HCT116 (cell line): ENCODE measurements at regions of chr3 and their contacts with region 1.

Region 1: GRCh38 chr3:170414202-170414663 is 4.4 kb upstream of the CLDN11 start:
- DNase-seq: peak; percentile 45
- ATAC-seq: peak; percentile 84
- H3K4me3 ChIP-seq: no peak overlapping the region
- H3K27ac ChIP-seq: no peak overlapping the region
- H3K4me1 ChIP-seq: no peaks in the 10 kb centered on the region
- H3K27me3 ChIP-seq: no peaks in the 10 kb centered on the region
- CTCF ChIP-seq: peak; percentile 92 to 98 (median 95)
- POLR2A ChIP-seq: no peak
- RAD21 ChIP-seq: peak; percentile 96

Region 2: DNA sequence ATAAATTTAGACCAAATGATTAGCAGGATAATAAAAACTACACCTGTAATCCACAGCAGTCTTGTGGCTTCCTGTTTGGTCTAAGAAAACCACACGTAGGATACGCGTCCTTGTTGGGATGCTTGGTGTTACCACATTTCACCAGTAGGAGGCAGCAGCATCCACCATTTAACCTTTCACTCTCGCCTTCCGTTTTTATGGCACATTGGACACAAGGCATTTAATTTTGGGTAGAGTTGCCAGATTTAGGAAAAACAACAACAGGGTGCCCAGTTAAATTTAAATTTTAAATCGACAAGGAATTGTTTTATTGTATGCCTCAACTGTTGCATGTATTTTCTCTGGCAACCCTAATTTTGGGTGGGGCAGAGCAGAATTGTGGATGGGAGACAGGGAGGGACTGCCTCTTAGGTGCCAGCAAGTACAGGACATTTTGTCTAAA is 550.8 kb before region 1 on chr3:
- CTCF ChIA-PET with region 1: no interaction called
- POLR2A ChIA-PET with region 1: no interaction called
- RAD21 ChIA-PET with region 1: no interaction called
- intact Hi-C with region 1: loop called (anchors 10 kb)
- DNase-seq: peak; percentile 73
- ATAC-seq: peak; percentile 94
- H3K4me3 ChIP-seq: no peak overlapping the region
- H3K27ac ChIP-seq: no peak overlapping the region
- H3K4me1 ChIP-seq: peaks cover 4 to 5% of the 10 kb centered on the region in 2 experiments; a peak in 3 of 4 replicates
- H3K27me3 ChIP-seq: no peaks in the 10 kb centered on the region
- CTCF ChIP-seq: peak; percentile 82 to 93 (median 83)
- POLR2A ChIP-seq: no peak
- RAD21 ChIP-seq: peak; percentile 90

Region 3: DNA sequence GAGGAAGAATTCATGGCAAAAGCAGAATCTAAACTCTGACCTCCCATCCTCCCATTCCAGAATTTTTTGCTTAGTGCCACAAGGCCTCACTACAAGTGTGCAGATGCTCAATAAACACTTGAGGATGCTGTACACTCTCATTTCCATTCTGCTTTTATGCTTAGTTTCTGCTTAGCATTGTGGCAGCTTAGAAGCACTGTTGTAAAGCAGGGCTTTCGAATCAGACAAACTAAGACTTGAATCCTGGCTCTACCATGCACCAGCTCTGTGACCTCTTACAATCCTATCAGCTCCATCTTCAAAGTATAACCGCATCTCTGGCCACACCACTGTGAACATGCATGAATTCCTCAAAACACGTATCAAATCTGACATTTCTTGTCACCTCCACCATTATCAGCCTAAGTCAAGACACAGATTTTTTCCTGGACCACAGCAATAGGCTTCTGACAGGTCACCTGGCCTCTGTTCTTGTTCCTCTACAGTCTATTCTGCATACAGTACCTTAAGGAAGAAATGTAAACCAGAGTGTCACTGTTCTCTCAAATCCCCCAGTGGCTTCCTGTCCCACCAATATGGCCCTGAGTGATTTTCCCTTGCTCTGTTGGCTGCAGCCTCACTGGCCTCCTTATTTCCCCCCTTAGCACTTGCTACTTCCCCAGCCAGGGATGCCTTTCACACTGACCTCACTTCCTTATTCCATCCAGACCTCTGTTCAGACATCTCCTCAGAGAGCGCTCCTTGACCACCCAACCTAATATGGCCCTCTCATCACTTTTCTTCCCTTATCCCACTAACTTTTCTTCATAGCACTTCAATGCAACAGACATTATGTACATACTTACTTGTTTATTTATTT is 224.6 kb before region 1 on chr3:
- CTCF ChIA-PET with region 1: interaction called, 3 read pairs
- POLR2A ChIA-PET with region 1: no interaction called
- RAD21 ChIA-PET with region 1: no interaction called
- intact Hi-C with region 1: loop called (anchors 5 kb)
- DNase-seq: no peak
- ATAC-seq: peak; percentile 52
- H3K4me3 ChIP-seq: peak overlapping the region in 1 of 2 experiments; percentile 8; a peak in 1 of 4 replicates
- H3K27ac ChIP-seq: no peak overlapping the region
- H3K4me1 ChIP-seq: peaks cover 0 to 8% of the 10 kb centered on the region in 2 experiments; a peak in 1 of 4 replicates
- H3K27me3 ChIP-seq: no peaks in the 10 kb centered on the region
- CTCF ChIP-seq: no peak
- POLR2A ChIP-seq: no peak
- RAD21 ChIP-seq: no peak

Region 4: GRCh38 chr3:170499565-170500156 is 85.4 kb after region 1 on chr3:
- CTCF ChIA-PET with region 1: interaction called, 11 read pairs
- POLR2A ChIA-PET with region 1: no interaction called
- RAD21 ChIA-PET with region 1: no interaction called
- intact Hi-C with region 1: loop called (anchors 5 kb)
- DNase-seq: peak; percentile 16
- ATAC-seq: peak; percentile 96
- H3K4me3 ChIP-seq: no peak overlapping the region
- H3K27ac ChIP-seq: no peak overlapping the region
- H3K4me1 ChIP-seq: no peaks in the 10 kb centered on the region
- H3K27me3 ChIP-seq: no peaks in the 10 kb centered on the region
- CTCF ChIP-seq: peak; percentile 39 to 82 (median 69); a peak in 5 of 6 replicates
- POLR2A ChIP-seq: no peak
- RAD21 ChIP-seq: peak; percentile 55

Region 5: DNA sequence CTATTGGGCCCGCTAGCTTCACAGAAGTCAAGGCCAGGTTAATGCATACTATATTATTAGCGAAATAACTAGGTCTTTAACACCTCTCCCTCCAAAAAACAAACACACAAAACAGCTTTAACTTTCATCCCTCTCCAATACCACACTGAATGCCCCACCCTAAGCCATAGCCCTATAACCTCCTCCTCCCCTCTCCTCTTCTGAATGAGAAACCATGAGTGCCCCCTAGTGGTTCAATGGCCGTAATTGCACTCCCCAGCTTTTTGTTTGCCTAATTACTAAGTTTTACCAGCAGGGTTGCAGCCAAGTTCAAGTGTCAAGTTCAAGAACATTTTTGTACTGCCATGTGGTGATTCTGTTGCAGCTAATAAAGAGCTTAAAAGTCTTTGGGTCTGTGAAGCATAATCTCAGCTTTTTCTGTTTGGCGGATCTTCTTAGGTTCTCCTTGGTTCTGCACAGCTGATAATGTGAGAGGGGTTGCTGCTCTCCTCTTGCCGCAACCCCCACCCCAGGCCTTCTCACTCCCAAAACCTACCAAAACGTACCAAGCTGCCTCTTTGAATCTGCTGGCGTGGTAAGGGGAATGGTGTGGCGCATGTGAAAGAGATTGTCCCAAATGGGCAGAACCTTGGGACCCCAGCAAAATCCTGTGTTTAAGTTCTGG is 397.8 kb after region 1 on chr3:
- CTCF ChIA-PET with region 1: interaction called, 212 read pairs
- POLR2A ChIA-PET with region 1: interaction called, 7 read pairs
- RAD21 ChIA-PET with region 1: interaction called, 7 to 8 read pairs
- intact Hi-C with region 1: loop called (anchors 1 kb)
- DNase-seq: peak; percentile 78
- ATAC-seq: peak; percentile 73
- H3K4me3 ChIP-seq: no peak overlapping the region
- H3K27ac ChIP-seq: no peak overlapping the region
- H3K4me1 ChIP-seq: peaks cover 8 to 24% of the 10 kb centered on the region in 2 experiments; a peak in 3 of 4 replicates
- H3K27me3 ChIP-seq: no peaks in the 10 kb centered on the region
- CTCF ChIP-seq: peak; percentile 85 to 98 (median 86)
- POLR2A ChIP-seq: no peak
- RAD21 ChIP-seq: peak; percentile 91